Kidney (tissue), 22 donors: ENCODE measurements at regions of chr6 and their contacts with region 1.

Region 1: GRCh38 chr6:110039364-110039980 is 61.4 kb downstream of the GPR6 start:
- DNase-seq: peak; percentile 89 to 96 (median 91)
- H3K4me3 ChIP-seq: peak overlapping the region; percentile 34 to 71 (median 46)
- H3K27ac ChIP-seq: no peak overlapping the region
- H3K4me1 ChIP-seq: no peaks in the 10 kb centered on the region
- H3K27me3 ChIP-seq: no peaks in the 10 kb centered on the region
- CTCF ChIP-seq: peak; percentile 96

Region 2: DNA sequence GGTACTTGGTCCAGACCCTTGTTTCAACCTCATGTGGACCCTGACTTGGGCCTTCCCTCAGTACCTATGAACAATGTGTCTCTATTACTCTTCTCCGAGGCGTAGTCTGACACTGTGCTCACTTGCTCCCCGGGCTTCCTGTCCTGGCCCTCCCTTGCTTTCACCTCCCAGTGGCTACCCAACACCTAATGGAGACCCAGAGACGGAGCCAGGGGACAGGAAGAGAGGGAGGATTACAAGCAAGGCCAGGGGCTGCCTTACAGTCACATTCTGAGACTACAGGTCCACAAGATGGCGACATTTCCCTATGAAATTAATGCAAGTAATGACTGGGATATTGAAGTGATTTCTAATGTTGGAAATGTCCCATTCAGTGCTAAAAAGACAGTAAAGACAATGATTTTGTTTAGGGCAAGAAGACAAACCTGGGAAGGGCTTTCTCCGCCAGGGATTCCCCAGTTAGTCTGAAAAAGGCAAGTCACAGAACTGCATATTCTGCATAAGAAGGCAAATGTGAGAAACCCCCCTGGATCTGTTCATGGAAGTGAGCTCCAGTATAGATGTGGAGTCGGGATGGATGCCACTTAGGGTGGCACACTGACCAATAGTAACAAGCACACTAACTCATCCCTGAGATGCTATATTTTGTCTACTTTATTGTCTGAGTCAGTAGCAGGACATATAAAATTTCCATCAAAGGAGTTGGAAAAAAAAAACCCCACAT is 512.4 kb before region 1 on chr6:
- intact Hi-C with region 1: no loop called
- DNase-seq: peak; percentile 43 to 87 (median 47)
- H3K4me3 ChIP-seq: no peak overlapping the region
- H3K27ac ChIP-seq: no peak overlapping the region
- H3K4me1 ChIP-seq: no peaks in the 10 kb centered on the region
- H3K27me3 ChIP-seq: no peaks in the 10 kb centered on the region
- CTCF ChIP-seq: peak; percentile 62

Region 3: DNA sequence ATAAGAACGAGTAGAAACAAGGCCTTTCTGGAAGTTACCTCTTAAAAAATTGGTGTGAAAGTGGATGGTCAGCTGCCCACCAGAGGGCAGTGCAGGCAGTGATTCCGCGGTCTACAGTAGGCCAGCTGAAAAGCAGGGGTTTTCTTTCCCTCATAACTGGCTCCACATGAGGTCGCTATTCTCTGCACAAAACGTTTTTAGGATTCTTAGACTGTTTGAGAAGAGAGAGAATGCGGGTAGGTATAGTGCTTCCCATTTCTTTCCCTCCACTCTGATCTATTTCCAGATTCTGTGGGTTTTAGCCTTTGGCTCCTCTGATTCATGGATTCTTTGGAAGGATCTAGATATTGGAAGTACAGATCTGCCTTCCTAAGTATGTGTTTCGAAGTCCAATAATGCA is 334.2 kb before region 1 on chr6:
- intact Hi-C with region 1: loop called (anchors 10 kb)
- DNase-seq: peak; percentile 79 to 96 (median 87)
- H3K4me3 ChIP-seq: no peak overlapping the region
- H3K27ac ChIP-seq: no peak overlapping the region
- H3K4me1 ChIP-seq: no peaks in the 10 kb centered on the region
- H3K27me3 ChIP-seq: no peaks in the 10 kb centered on the region
- CTCF ChIP-seq: peak; percentile 100